Esophagus squamous epithelium (tissue), 5 donors: ENCODE measurements at regions of chr3 and their contacts with region 1.

Region 1: GRCh38 chr3:133821767-133822638 is 16.4 kb downstream of the SRPRB start:
- DNase-seq: no peak
- H3K4me3 ChIP-seq: no peak overlapping the region
- H3K27ac ChIP-seq: peak overlapping the region in 1 of 4 donors; percentile 19
- H3K4me1 ChIP-seq: peaks cover 0 to 35% (median 19%) of the 10 kb centered on the region in 3 donors
- H3K27me3 ChIP-seq: no peaks in the 10 kb centered on the region
- CTCF ChIP-seq: peak in 3 of 6 experiments; percentile 16 to 67 (median 50)
- POLR2A ChIP-seq: no peak

Region 2: DNA sequence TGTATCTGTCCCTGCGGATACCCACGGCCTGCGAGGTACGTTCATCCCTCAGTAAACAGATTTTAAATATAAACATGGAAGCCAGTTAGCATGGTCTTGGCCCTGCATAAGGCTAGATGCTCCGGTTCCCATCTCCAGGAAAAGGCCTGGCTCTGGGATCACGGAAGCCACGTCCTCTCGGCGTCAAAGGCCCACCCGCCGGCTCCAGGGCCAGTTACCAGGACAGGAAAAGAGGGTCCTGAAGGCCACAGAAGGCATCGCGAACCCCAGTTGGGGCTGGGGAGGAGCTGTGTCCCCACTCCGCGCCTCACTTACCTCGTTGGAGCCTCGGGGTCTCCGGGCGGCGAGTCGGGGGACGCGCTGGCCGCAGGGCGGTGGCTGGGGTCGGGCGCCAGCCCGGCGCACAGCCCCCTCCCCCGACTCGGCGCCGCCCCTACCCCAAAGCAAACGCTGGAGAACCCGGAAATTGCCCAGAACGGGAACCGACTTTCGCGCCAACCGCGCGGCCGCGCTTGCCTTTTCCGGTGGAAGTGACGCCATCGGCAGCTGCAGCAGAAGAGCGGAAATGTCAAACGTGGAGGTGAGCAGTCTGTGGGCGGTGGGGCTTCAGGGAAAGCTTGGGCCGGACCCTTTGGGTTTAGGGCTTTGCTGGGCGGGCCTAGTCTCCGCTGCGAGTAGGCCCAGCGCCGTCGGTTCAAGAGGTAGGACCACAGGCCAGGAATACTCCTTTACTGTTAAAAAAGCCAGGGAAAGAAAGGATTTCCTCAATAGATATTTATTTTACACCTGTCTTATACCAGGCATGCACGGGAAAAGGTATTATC is 160.3 kb before region 1 on chr3 and contains the start of gene TOPBP1:
- intact Hi-C with region 1: loop called (anchors 10 kb)
- DNase-seq: peak; percentile 12
- H3K4me3 ChIP-seq: peak within 1 kb of the TSS; percentile 78 to 99 (median 88)
- H3K27ac ChIP-seq: peak within 1 kb of the TSS; percentile 85 to 96 (median 92)
- H3K4me1 ChIP-seq: peaks cover 3 to 44% (median 10%) of the 10 kb centered on the region in 3 donors
- H3K27me3 ChIP-seq: no peaks in the 10 kb centered on the region
- CTCF ChIP-seq: no peak
- POLR2A ChIP-seq: peak in 1 of 4 donors; percentile 42
- total RNA-seq, gene TOPBP1: 8.6 to 31.1 (median 25.3) TPM

Region 3: DNA sequence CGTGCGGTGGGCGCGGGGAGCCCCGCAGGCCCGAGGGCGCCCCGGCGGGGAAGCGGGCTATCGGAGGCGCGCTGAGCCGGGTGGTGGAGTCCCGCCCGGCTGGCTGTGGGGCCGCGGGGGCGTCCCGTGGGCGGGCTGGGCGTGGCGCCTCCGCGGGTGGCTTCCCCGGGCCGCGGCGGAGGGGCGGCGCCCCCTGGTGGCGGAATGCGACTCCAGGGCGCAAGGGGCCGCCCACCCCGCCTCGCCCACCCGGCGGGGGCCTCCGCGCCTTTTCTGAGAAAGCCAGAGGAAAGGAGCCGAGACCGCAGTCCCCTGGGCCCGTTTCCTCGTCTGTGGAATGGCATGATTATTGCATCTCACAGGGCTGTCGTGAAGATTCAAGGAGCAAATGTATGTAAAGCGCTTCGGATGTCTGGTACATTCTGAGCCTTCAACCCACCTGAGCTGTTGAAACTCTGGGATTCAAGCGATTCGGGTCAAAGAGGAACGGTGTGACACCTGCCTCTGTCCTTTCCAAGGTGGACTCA is 105.6 kb after region 1 on chr3:
- intact Hi-C with region 1: loop called (anchors 5 kb)
- DNase-seq: no peak
- H3K4me3 ChIP-seq: peak overlapping the region; percentile 42 to 67 (median 48)
- H3K27ac ChIP-seq: no peak overlapping the region
- H3K4me1 ChIP-seq: peaks cover 9 to 20% (median 13%) of the 10 kb centered on the region in 3 donors
- H3K27me3 ChIP-seq: peaks cover 0 to 12% (median 0%) of the 10 kb centered on the region in 4 donors
- CTCF ChIP-seq: peak; percentile 65 to 92 (median 85)
- POLR2A ChIP-seq: no peak